ENCODE measurements at regions of chr6 and their contacts with region 1.

Region 1: GRCh38 chr6:159414711-159415110 is 245.5 kb downstream of the FNDC1 start:
- DNase-seq: no peak
- H3K4me3 ChIP-seq: no peak overlapping the region
- H3K27ac ChIP-seq: no peak overlapping the region
- H3K4me1 ChIP-seq: no peaks in the 10 kb centered on the region
- H3K27me3 ChIP-seq: no peaks in the 10 kb centered on the region
- CTCF ChIP-seq: no peak
- EP300 ChIP-seq: no peak
- POLR2A ChIP-seq: no peak

Region 2: DNA sequence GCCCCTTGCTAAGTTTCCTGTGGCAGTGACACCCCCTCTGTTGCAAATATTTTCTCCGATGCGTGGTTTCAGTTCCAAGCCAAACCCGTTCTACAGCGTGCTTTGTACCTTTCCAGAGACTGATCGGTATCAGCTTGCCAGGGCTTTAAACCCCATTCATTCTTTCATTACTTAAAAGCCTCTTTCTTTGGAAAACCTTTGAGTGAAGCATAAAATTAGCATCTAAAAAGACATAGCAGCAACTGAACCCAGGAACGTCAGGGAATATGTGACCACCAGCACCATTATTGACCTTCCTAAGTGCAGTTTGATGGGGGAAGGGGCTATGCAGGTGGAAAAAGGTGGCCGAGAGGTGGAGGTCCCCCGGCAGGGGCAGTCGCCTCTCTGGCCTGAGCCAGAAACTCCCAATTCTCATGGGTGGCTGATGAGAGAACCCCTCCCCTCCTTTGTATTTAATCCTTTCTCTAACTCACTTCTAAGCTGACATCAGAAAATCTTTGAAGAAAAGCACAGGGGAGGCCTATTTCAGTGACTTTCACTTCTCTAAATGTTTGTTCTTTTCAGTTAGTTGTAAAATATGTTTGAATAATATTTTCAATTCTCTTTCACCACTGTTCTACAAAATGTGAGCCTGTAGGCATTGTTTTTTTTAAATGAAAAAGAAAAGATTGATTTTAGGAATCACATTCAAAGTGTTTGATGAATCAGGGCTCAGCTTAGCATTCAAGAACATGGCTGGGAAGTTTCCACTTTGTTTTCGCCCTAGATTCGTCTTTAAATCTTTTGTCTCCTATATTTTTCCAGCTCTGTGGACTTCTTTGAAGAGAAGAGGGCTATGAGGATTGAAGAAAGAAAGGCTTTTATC is 504.0 kb before region 1 on chr6:
- intact Hi-C with region 1: no loop called
- DNase-seq: no peak
- H3K4me3 ChIP-seq: no peak overlapping the region
- H3K27ac ChIP-seq: no peak overlapping the region
- H3K4me1 ChIP-seq: no peaks in the 10 kb centered on the region
- H3K27me3 ChIP-seq: no peaks in the 10 kb centered on the region
- CTCF ChIP-seq: no peak
- EP300 ChIP-seq: no peak
- POLR2A ChIP-seq: no peak

Region 3: GRCh38 chr6:159450815-159451465 is 36.2 kb after region 1 on chr6:
- intact Hi-C with region 1: no loop called
- DNase-seq: no peak
- H3K4me3 ChIP-seq: no peak overlapping the region
- H3K27ac ChIP-seq: no peak overlapping the region
- H3K4me1 ChIP-seq: peaks cover 2% of the 10 kb centered on the region
- H3K27me3 ChIP-seq: no peaks in the 10 kb centered on the region
- CTCF ChIP-seq: no peak
- EP300 ChIP-seq: no peak
- POLR2A ChIP-seq: no peak

Region 4: GRCh38 chr6:159473475-159474263 is 59.0 kb after region 1 on chr6:
- intact Hi-C with region 1: no loop called
- DNase-seq: no peak
- H3K4me3 ChIP-seq: no peak overlapping the region
- H3K27ac ChIP-seq: no peak overlapping the region
- H3K4me1 ChIP-seq: no peaks in the 10 kb centered on the region
- H3K27me3 ChIP-seq: no peaks in the 10 kb centered on the region
- CTCF ChIP-seq: no peak
- EP300 ChIP-seq: no peak
- POLR2A ChIP-seq: no peak

Region 5: DNA sequence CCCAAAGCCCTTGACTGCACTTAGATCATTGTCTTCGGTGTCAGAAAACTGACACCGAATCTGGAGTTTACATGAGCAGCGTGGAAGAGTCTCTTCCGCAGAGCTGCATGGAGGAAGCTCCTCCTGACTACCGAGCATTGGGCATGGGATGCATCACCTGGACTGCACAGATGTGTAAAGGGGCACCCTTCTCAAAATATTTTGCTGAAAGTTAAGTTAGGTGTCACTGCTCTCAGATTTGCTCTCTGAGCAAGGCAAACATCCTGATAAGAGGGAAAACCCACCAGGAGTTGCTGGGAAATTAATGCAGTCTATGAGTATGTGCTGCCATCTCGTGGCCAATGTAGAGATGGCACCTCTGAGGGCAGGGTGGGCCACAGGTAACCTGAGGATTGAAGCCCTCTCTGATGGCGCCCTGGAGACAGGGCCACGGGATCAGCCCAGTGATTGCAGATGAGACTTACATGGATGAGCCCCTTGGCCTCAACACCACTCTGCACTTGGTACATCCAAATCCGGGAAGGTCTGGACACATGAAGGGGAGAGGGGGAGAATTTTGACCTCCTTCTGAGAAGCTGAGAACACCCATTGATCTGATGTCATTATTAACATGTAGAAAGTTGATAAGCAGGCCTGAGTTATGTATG is 1119.5 kb after region 1 on chr6:
- intact Hi-C with region 1: no loop called
- DNase-seq: peak; percentile 28 to 73 (median 68)
- H3K4me3 ChIP-seq: no peak overlapping the region
- H3K27ac ChIP-seq: no peak overlapping the region
- H3K4me1 ChIP-seq: peaks cover 2% of the 10 kb centered on the region
- H3K27me3 ChIP-seq: no peaks in the 10 kb centered on the region
- CTCF ChIP-seq: peak; percentile 81 to 86 (median 85)
- EP300 ChIP-seq: no peak
- POLR2A ChIP-seq: no peak

Region 6: GRCh38 chr6:161411265-161411944 is 1996.7 kb after region 1 on chr6:
- intact Hi-C with region 1: loop called in 1 of 4 experiments (anchors 5 kb)
- DNase-seq: no peak
- H3K4me3 ChIP-seq: no peak overlapping the region
- H3K27ac ChIP-seq: no peak overlapping the region
- H3K4me1 ChIP-seq: no peaks in the 10 kb centered on the region
- H3K27me3 ChIP-seq: no peaks in the 10 kb centered on the region
- CTCF ChIP-seq: no peak
- EP300 ChIP-seq: no peak
- POLR2A ChIP-seq: no peak